Activated CD4-positive, alpha-beta memory T cell treated with anti-CD3 and anti-CD28 coated beads for 36 hours (primary cell): ENCODE measurements at regions of chr21 and their contacts with region 1.

Region 1: GRCh38 chr21:17387030-17387617 is 125.7 kb upstream of the CXADR start:
- DNase-seq: peak; percentile 29
- H3K4me3 Mint-ChIP-seq: no peak overlapping the region
- H3K27ac Mint-ChIP-seq: no peak overlapping the region
- H3K4me1 Mint-ChIP-seq: no peaks in the 10 kb centered on the region
- H3K27me3 Mint-ChIP-seq: peaks cover 5% of the 10 kb centered on the region

Region 2: DNA sequence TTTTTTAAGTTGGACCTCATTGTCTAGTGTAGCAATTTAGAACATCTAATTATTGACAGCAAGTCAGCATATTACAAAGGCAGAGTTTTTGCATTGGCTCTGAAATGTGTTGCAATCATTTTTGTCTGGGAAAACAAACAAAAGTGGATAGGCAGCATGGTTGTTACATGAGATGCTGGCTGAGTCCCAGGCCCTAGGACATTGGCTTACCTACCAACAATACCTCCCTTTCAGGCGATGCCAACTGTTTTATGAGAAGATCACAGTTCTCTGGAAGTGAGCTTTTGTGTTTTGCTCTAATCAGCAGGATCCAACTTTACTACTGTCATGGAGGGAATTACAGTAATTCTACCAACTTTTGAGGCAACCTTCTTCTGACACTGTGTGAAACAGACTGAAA is 54.2 kb after region 1 on chr21:
- CTCF ChIA-PET with region 1: no interaction called
- POLR2A ChIA-PET with region 1: no interaction called
- intact Hi-C with region 1: no loop called
- DNase-seq: no peak
- H3K4me3 Mint-ChIP-seq: no peak overlapping the region
- H3K27ac Mint-ChIP-seq: no peak overlapping the region
- H3K4me1 Mint-ChIP-seq: no peaks in the 10 kb centered on the region
- H3K27me3 Mint-ChIP-seq: peaks cover 12% of the 10 kb centered on the region

Region 3: GRCh38 chr21:17512253-17513213 is 125.4 kb after region 1 on chr21 and contains the start of gene CXADR:
- CTCF ChIA-PET with region 1: interaction called, 9 read pairs
- POLR2A ChIA-PET with region 1: no interaction called
- intact Hi-C with region 1: loop called (anchors 2 kb)
- DNase-seq: peak; percentile 83
- H3K4me3 Mint-ChIP-seq: peak within 1 kb of the TSS; percentile 77
- H3K27ac Mint-ChIP-seq: no peak within 1 kb of the TSS
- H3K4me1 Mint-ChIP-seq: peaks cover 14% of the 10 kb centered on the region
- H3K27me3 Mint-ChIP-seq: peaks cover 14% of the 10 kb centered on the region
- total RNA-seq, gene CXADR: 0.29 to 0.75 TPM

Region 4: GRCh38 chr21:17585875-17586450 is 198.8 kb after region 1 on chr21:
- CTCF ChIA-PET with region 1: interaction called, 145 read pairs
- POLR2A ChIA-PET with region 1: no interaction called
- intact Hi-C with region 1: loop called (anchors 1 kb)
- DNase-seq: no peak
- H3K4me3 Mint-ChIP-seq: no peak overlapping the region
- H3K27ac Mint-ChIP-seq: no peak overlapping the region
- H3K4me1 Mint-ChIP-seq: no peaks in the 10 kb centered on the region
- H3K27me3 Mint-ChIP-seq: peaks cover 1% of the 10 kb centered on the region

Region 5: GRCh38 chr21:17903029-17903806 is 516.1 kb after region 1 on chr21:
- CTCF ChIA-PET with region 1: no interaction called
- POLR2A ChIA-PET with region 1: no interaction called
- intact Hi-C with region 1: loop called (anchors 5 kb)
- DNase-seq: no peak
- H3K4me3 Mint-ChIP-seq: no peak overlapping the region
- H3K27ac Mint-ChIP-seq: no peak overlapping the region
- H3K4me1 Mint-ChIP-seq: peaks cover 6% of the 10 kb centered on the region
- H3K27me3 Mint-ChIP-seq: no peaks in the 10 kb centered on the region